ENCODE measurements at regions of chr12 and their contacts with region 1.

Region 1: GRCh38 chr12:46124848-46125619 is 134.7 kb upstream of the SCAF11 start:
- DNase-seq: peak; percentile 74
- ATAC-seq: peak; percentile 86
- H3K4me3 ChIP-seq: peak overlapping the region in 1 of 5 experiments; percentile 6
- H3K4me3 Mint-ChIP-seq: peak overlapping the region; percentile 62
- H3K27ac ChIP-seq: no peak overlapping the region
- H3K27ac Mint-ChIP-seq: peak overlapping the region; percentile 84
- H3K4me1 ChIP-seq: peaks cover 3 to 4% of the 10 kb centered on the region in 2 donors
- H3K4me1 Mint-ChIP-seq: peaks cover 5% of the 10 kb centered on the region
- H3K27me3 ChIP-seq: no peaks in the 10 kb centered on the region
- H3K27me3 Mint-ChIP-seq: peaks cover 10% of the 10 kb centered on the region
- CTCF ChIP-seq: peak; percentile 77

Region 2: GRCh38 chr12:45034861-45035265 is 1090.2 kb before region 1 on chr12:
- CTCF ChIA-PET with region 1: no interaction called
- POLR2A ChIA-PET with region 1: no interaction called
- intact Hi-C with region 1: no loop called
- DNase-seq: no peak
- ATAC-seq: no peak
- H3K4me3 ChIP-seq: no peak overlapping the region
- H3K4me3 Mint-ChIP-seq: no peak overlapping the region
- H3K27ac ChIP-seq: no peak overlapping the region
- H3K27ac Mint-ChIP-seq: no peak overlapping the region
- H3K4me1 ChIP-seq: no peaks in the 10 kb centered on the region
- H3K4me1 Mint-ChIP-seq: no peaks in the 10 kb centered on the region
- H3K27me3 ChIP-seq: peaks cover 0 to 3% (median 0%) of the 10 kb centered on the region in 4 experiments
- H3K27me3 Mint-ChIP-seq: peaks cover 3% of the 10 kb centered on the region
- CTCF ChIP-seq: no peak

Region 3: DNA sequence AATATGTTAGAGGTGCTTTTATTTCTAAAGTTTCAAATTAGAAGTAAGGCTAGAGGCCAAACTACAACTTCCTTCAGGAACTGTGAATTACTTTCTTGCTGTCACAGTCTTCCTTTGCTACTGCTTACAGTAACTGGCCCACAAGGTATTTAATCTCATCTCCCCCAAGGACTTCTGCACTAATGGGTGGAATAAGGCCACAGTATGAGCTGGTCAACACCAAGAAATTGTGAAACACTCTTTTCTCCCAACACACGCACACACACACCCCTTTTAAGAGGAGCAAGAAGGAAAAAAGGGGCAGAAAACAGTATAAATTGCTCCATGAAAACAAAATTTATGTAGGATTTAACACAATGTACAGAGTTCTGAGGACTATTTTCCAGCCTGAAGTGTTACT is 180.3 kb before region 1 on chr12:
- CTCF ChIA-PET with region 1: no interaction called
- POLR2A ChIA-PET with region 1: no interaction called
- intact Hi-C with region 1: no loop called
- DNase-seq: no peak
- ATAC-seq: no peak
- H3K4me3 ChIP-seq: no peak overlapping the region
- H3K4me3 Mint-ChIP-seq: no peak overlapping the region
- H3K27ac ChIP-seq: no peak overlapping the region
- H3K27ac Mint-ChIP-seq: no peak overlapping the region
- H3K4me1 ChIP-seq: no peaks in the 10 kb centered on the region
- H3K4me1 Mint-ChIP-seq: peaks cover 1% of the 10 kb centered on the region
- H3K27me3 ChIP-seq: no peaks in the 10 kb centered on the region
- H3K27me3 Mint-ChIP-seq: no peaks in the 10 kb centered on the region
- CTCF ChIP-seq: no peak

Region 4: DNA sequence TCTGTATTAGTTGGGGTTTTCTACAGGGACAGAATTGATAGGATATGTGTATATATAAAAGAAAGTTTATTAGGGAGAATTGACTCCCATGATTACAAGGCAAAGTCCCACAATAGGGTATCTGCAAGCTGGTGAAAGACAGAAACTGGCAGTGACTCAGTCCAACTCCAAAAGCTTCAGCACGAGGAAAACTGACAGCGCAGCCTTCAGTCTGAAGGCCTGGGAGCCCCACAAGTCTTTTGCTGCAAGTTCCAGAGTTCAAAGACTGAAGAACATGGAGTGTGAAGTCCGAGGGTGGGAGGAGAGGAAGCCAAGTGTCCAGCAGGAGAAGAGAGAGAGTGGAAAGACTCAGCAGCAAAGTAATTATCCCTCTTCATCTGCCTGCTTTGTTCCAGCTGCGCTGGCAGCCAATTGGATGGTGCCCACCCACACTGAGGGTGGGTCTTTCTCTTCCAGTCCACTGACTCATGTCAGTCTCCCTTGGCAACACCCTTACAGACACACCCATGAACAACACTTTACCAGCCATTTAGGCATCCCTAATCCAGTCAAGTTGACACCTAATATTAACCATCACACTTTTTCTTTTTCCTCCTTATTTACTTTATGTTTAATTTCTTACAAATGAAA is 24.1 kb before region 1 on chr12:
- CTCF ChIA-PET with region 1: interaction called, 10 read pairs
- POLR2A ChIA-PET with region 1: interaction called, 3 read pairs
- intact Hi-C with region 1: no loop called
- DNase-seq: no peak
- ATAC-seq: no peak
- H3K4me3 ChIP-seq: no peak overlapping the region
- H3K4me3 Mint-ChIP-seq: no peak overlapping the region
- H3K27ac ChIP-seq: no peak overlapping the region
- H3K27ac Mint-ChIP-seq: no peak overlapping the region
- H3K4me1 ChIP-seq: peaks cover 8 to 9% of the 10 kb centered on the region in 2 donors
- H3K4me1 Mint-ChIP-seq: peaks cover 10% of the 10 kb centered on the region
- H3K27me3 ChIP-seq: no peaks in the 10 kb centered on the region
- H3K27me3 Mint-ChIP-seq: no peaks in the 10 kb centered on the region
- CTCF ChIP-seq: no peak

Region 5: DNA sequence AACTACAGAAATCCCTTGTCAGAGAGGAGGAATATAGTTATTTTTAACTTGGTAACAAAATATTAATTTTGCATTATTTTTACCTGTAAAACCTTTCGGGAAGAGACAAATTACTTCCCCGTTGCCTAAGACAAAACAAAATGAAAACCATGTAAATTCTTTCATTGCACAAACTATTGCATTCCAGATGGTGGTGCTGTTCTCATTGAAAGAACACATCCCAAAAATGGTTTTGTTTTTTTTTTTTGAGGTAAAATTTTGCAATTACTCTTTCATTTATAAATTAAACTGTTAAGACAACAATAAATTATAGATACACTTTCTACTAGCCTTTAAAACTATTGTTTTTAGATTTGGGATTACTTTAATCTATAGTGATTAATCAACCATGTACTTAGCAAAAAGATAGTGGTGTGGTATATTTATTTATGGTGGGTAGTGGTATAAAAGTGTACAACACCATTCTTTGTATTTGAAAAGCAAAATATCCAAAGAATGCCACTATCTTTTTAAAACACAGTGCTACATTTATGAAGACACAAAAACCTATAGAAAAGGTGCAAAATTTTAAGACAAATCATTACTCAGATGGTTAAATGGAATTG is 28.3 kb after region 1 on chr12:
- CTCF ChIA-PET with region 1: interaction called, 10 read pairs
- POLR2A ChIA-PET with region 1: no interaction called
- intact Hi-C with region 1: loop called (anchors 2 kb)
- DNase-seq: peak; percentile 56
- ATAC-seq: no peak
- H3K4me3 ChIP-seq: peak overlapping the region in 1 of 5 experiments; percentile 12
- H3K4me3 Mint-ChIP-seq: no peak overlapping the region
- H3K27ac ChIP-seq: no peak overlapping the region
- H3K27ac Mint-ChIP-seq: no peak overlapping the region
- H3K4me1 ChIP-seq: peaks cover 11 to 16% of the 10 kb centered on the region in 2 donors
- H3K4me1 Mint-ChIP-seq: peaks cover 26% of the 10 kb centered on the region
- H3K27me3 ChIP-seq: no peaks in the 10 kb centered on the region
- H3K27me3 Mint-ChIP-seq: peaks cover 4% of the 10 kb centered on the region
- CTCF ChIP-seq: peak; percentile 93

Region 6: DNA sequence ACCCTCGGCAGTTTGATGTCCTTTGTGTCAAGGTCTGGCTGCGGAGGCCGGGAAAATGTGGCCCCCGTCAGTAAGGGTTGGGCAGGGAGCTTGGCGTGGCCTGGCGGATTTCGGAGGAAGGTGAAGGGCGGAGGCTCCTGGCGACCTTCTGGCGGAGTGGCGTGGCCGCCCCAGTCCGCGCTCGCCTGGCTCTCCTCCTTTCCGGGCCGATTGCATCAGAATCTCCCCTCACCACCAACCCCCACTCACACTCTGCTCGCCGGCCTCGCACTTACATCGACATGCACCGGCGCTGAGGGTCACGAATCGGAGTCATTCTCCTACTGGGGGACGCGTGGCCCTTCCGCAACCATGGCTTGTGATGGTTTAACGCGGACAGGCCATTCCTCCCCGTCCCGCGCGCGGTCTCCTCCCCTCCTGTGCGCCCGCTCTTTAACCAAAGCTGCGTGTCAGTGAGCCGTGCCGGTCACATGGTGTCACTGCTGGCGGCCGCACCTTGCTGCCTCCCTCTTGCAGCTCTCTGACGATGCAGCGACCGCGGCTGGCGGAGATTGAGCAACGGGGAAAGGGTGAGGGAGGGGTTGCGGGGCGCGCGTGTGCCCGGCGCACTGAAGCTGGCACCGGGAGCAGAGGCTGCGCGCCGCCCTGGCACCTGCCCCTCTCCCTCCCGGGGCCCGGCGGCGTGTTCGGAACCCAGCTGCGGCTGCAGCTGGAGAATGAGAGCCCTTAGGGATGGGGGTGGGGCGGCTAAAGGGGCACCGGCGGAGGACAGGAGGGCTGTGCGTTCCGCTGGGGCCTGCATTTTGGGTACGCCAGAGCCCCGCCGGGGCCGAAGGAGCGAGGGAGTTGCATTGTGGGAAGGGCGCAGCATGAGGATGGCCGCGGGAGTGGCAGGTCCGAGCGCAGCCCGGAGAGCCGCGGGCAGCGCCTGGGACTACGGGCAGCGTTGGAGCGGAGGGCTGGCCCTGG is 143.8 kb after region 1 on chr12 and contains the start of gene SLC38A1:
- CTCF ChIA-PET with region 1: interaction called, 13 read pairs
- POLR2A ChIA-PET with region 1: interaction called, 4 read pairs
- intact Hi-C with region 1: no loop called
- DNase-seq: peak; percentile 93
- ATAC-seq: peak; percentile 69
- H3K4me3 ChIP-seq: peak within 1 kb of the TSS; percentile 70 to 98 (median 96)
- H3K4me3 Mint-ChIP-seq: no peak within 1 kb of the TSS
- H3K27ac ChIP-seq: peak within 1 kb of the TSS; percentile 91 to 94
- H3K27ac Mint-ChIP-seq: no peak within 1 kb of the TSS
- H3K4me1 ChIP-seq: peaks cover 38 to 41% of the 10 kb centered on the region in 2 donors
- H3K4me1 Mint-ChIP-seq: peaks cover 30% of the 10 kb centered on the region
- H3K27me3 ChIP-seq: no peaks in the 10 kb centered on the region
- H3K27me3 Mint-ChIP-seq: no peaks in the 10 kb centered on the region
- CTCF ChIP-seq: no peak
- total RNA-seq, gene SLC38A1: 205 and 219 TPM in 2 replicates

Region 7: DNA sequence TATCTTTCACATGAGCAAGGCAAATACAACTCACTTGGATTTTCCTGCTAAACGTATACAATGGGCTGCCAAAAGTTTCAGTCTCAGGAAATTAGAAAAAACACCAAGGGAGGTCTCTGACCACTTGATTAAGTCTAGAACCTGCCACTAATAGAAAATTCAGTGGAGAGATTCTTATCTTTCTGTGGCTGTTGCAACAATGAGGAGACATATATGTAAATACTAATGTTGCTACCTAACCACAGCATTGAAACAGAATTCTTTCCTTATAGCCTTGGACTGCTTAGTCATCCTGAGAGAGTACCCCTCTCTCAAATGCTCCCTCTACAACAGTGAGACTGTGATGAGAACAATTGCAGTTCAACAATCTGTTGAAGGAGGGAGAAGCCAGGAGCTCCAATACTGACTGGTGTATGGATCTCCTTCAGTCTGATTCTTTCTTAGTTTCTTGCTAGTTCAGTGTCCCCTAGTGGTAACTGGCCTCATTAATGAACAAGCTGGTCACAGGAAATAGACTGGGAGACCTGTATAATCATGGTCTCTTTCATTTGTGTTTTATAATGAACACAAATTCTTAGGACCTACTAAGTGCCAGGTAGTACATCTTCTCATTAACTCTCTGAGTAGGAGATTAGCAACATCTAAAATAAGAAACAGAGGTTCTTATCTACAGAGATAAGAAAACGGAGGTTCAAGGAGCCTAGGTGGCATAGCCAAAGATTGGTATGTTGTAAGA is 536.2 kb after region 1 on chr12:
- CTCF ChIA-PET with region 1: interaction called, 19 read pairs
- POLR2A ChIA-PET with region 1: no interaction called
- intact Hi-C with region 1: loop called (anchors 2 kb)
- DNase-seq: peak; percentile 70
- ATAC-seq: peak; percentile 88
- H3K4me3 ChIP-seq: peak overlapping the region in 3 of 5 experiments; percentile 1 to 16 (median 7)
- H3K4me3 Mint-ChIP-seq: peak overlapping the region; percentile 29
- H3K27ac ChIP-seq: no peak overlapping the region
- H3K27ac Mint-ChIP-seq: peak overlapping the region; percentile 64
- H3K4me1 ChIP-seq: peaks cover 21 to 27% of the 10 kb centered on the region in 2 donors
- H3K4me1 Mint-ChIP-seq: peaks cover 28% of the 10 kb centered on the region
- H3K27me3 ChIP-seq: no peaks in the 10 kb centered on the region
- H3K27me3 Mint-ChIP-seq: no peaks in the 10 kb centered on the region
- CTCF ChIP-seq: peak; percentile 70

Region 8: GRCh38 chr12:47021298-47021697 is 896.3 kb after region 1 on chr12:
- CTCF ChIA-PET with region 1: interaction called, 40 read pairs
- POLR2A ChIA-PET with region 1: interaction called, 5 read pairs
- intact Hi-C with region 1: loop called (anchors 1 kb)
- DNase-seq: peak; percentile 70
- ATAC-seq: peak; percentile 28
- H3K4me3 ChIP-seq: no peak overlapping the region
- H3K4me3 Mint-ChIP-seq: no peak overlapping the region
- H3K27ac ChIP-seq: no peak overlapping the region
- H3K27ac Mint-ChIP-seq: no peak overlapping the region
- H3K4me1 ChIP-seq: no peaks in the 10 kb centered on the region
- H3K4me1 Mint-ChIP-seq: no peaks in the 10 kb centered on the region
- H3K27me3 ChIP-seq: peaks cover 0 to 3% (median under 1%) of the 10 kb centered on the region in 4 experiments
- H3K27me3 Mint-ChIP-seq: peaks cover 9% of the 10 kb centered on the region
- CTCF ChIP-seq: peak; percentile 88

Measured in B cell (primary cell).